Aorta (tissue), 5 donors: ENCODE measurements at regions of chr1 and their contacts with region 1.

Region 1: DNA sequence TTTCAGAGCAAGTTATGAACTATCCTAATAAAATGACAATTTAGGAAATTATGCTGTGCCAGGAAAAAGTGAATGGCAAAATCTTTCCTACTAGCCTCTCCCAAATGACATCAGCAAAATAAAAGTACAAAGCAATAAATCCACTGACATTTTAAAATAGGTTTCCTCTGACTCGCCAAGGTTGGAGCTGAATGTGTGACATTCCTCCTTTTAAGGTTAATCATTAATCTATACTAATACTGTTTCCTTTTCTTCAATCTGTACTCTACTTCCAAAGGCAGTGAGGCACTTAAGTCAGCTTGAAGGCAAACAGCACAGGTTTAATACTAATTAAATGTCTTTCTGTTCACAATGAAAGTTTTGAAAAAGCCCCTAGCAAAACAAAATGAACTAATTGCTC is 15.7 kb downstream of the RNF19B start:
- DNase-seq: no peak
- ATAC-seq: peak; percentile 52
- H3K4me3 ChIP-seq: no peak overlapping the region
- H3K27ac ChIP-seq: no peak overlapping the region
- H3K4me1 ChIP-seq: peaks cover 6 to 10% of the 10 kb centered on the region in 2 donors
- H3K27me3 ChIP-seq: no peaks in the 10 kb centered on the region

Region 2: GRCh38 chr1:32761253-32761880 is 187.5 kb before region 1 on chr1:
- intact Hi-C with region 1: no loop called
- DNase-seq: no peak
- ATAC-seq: no peak
- H3K4me3 ChIP-seq: no peak overlapping the region
- H3K27ac ChIP-seq: no peak overlapping the region
- H3K4me1 ChIP-seq: no peaks in the 10 kb centered on the region
- H3K27me3 ChIP-seq: no peaks in the 10 kb centered on the region

Region 3: GRCh38 chr1:32925403-32926162 is 23.3 kb before region 1 on chr1:
- intact Hi-C with region 1: no loop called
- DNase-seq: no peak
- ATAC-seq: peak; percentile 31
- H3K4me3 ChIP-seq: no peak overlapping the region
- H3K27ac ChIP-seq: no peak overlapping the region
- H3K4me1 ChIP-seq: peaks cover 0 to 2% of the 10 kb centered on the region in 2 donors
- H3K27me3 ChIP-seq: no peaks in the 10 kb centered on the region

Region 4: GRCh38 chr1:32964461-32965250 is 15.8 kb after region 1 on chr1 and contains the start of gene RNF19B:
- intact Hi-C with region 1: loop called in 1 of 2 experiments (anchors 2 kb)
- DNase-seq: peak; percentile 97 to 98
- ATAC-seq: peak; percentile 98
- H3K4me3 ChIP-seq: peak within 1 kb of the TSS; percentile 90 to 92
- H3K27ac ChIP-seq: peak within 1 kb of the TSS in 1 of 2 donors; percentile 89
- H3K4me1 ChIP-seq: peaks cover 0 to 3% of the 10 kb centered on the region in 2 donors
- H3K27me3 ChIP-seq: no peaks in the 10 kb centered on the region
- total RNA-seq, gene RNF19B: 25.5 to 51.5 TPM

Region 5: GRCh38 chr1:32989160-32990050 is 40.5 kb after region 1 on chr1:
- intact Hi-C with region 1: loop called in 1 of 2 experiments (anchors 5 kb)
- DNase-seq: peak; percentile 90
- ATAC-seq: peak; percentile 89
- H3K4me3 ChIP-seq: no peak overlapping the region
- H3K27ac ChIP-seq: peak overlapping the region in 1 of 2 donors; percentile 60
- H3K4me1 ChIP-seq: no peaks in the 10 kb centered on the region
- H3K27me3 ChIP-seq: no peaks in the 10 kb centered on the region